Colonic mucosa (tissue), 4 donors: ENCODE measurements at regions of chr18 and their contacts with region 1.

Region 1: GRCh38 chr18:47247036-47247832 is 4.2 kb downstream of the SKOR2 start:
- DNase-seq: no peak
- H3K4me3 ChIP-seq: no peak overlapping the region
- H3K27ac ChIP-seq: no peak overlapping the region
- H3K4me1 ChIP-seq: no peaks in the 10 kb centered on the region
- H3K27me3 ChIP-seq: peaks cover 61% of the 10 kb centered on the region
- CTCF ChIP-seq: no peak

Region 2: GRCh38 chr18:46761059-46761769 is 486.0 kb before region 1 on chr18:
- intact Hi-C with region 1: loop called (anchors 10 kb)
- DNase-seq: no peak
- H3K4me3 ChIP-seq: no peak overlapping the region
- H3K27ac ChIP-seq: no peak overlapping the region
- H3K4me1 ChIP-seq: no peaks in the 10 kb centered on the region
- H3K27me3 ChIP-seq: peaks cover 30% of the 10 kb centered on the region
- CTCF ChIP-seq: no peak

Region 3: GRCh38 chr18:47870605-47871004 is 623.4 kb after region 1 on chr18:
- intact Hi-C with region 1: no loop called
- DNase-seq: no peak
- H3K4me3 ChIP-seq: no peak overlapping the region
- H3K27ac ChIP-seq: no peak overlapping the region
- H3K4me1 ChIP-seq: no peaks in the 10 kb centered on the region
- H3K27me3 ChIP-seq: no peaks in the 10 kb centered on the region
- CTCF ChIP-seq: no peak